Activated CD4-positive, alpha-beta T cell treated with anti-CD3 and anti-CD28 coated beads for 36 hours (primary cell): ENCODE measurements at regions of chr4 and their contacts with region 1.

Region 1: DNA sequence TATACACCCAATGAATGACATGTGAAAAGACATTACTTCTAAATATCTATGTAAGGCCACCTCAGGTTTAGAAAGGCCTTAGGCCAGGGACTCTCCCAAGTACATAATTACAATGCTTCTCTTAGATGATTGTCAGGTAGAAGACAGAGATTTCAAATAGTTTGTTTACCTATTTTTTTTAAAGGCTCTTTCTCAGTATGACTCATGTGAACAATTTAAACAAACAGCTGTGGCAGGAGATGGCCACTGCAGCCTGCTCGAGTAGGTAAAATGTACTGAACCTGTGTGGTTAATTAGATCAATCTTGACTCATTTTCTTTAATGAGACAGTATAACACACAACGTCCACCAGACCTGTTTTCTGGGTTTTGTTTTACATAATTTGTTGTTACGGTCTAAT is 50.2 kb downstream of the LEF1 start:
- DNase-seq: peak; percentile 53
- ATAC-seq: peak; percentile 18
- H3K4me3 Mint-ChIP-seq: peak overlapping the region; percentile 52
- H3K27ac Mint-ChIP-seq: peak overlapping the region; percentile 87
- H3K4me1 Mint-ChIP-seq: peaks cover 93% of the 10 kb centered on the region
- H3K27me3 Mint-ChIP-seq: no peaks in the 10 kb centered on the region

Region 2: GRCh38 chr4:108100827-108101226 is 17.7 kb before region 1 on chr4:
- CTCF ChIA-PET with region 1: interaction called, 46 read pairs
- POLR2A ChIA-PET with region 1: interaction called, 8 read pairs
- intact Hi-C with region 1: loop called in 1 of 2 experiments (anchors 1 kb)
- DNase-seq: no peak
- ATAC-seq: peak; percentile 23
- H3K4me3 Mint-ChIP-seq: peak overlapping the region; percentile 10
- H3K27ac Mint-ChIP-seq: peak overlapping the region; percentile 84
- H3K4me1 Mint-ChIP-seq: peaks cover 89% of the 10 kb centered on the region
- H3K27me3 Mint-ChIP-seq: no peaks in the 10 kb centered on the region

Region 3: DNA sequence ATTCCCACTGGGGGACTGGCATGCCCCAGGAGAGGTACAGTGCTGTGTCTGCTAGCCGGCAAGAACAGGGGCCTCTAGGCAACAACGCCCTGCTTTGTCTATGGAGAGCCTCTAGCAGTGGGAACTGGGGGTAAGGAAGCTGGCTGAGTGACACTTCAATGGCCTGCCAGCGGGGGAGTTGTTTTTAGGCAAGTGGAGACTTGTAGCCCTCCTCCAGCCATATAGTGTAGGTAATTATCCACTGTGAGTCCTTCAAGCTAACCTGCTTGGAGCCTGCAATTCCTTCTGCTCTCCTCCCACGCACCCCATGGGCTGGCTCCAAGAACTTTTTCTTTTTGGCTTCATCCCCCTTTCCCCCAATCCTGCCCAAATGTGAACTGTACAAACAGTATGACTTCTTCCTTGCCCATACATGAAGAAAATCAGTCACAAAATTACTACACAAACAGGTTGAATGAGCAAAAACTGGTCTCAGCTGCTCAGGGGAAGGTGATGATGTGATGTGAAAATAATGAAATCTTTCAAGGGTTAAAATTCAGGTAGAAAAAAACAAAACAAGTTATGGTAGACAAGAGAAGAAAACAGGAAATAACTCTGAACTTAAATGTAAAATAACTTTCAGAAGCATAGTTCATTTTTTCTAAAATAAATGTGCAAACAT is 17.2 kb after region 1 on chr4:
- CTCF ChIA-PET with region 1: interaction called, 37 read pairs
- POLR2A ChIA-PET with region 1: interaction called, 5 read pairs
- intact Hi-C with region 1: loop called (anchors 1 to 2 kb)
- DNase-seq: peak; percentile 42
- ATAC-seq: peak; percentile 48
- H3K4me3 Mint-ChIP-seq: peak overlapping the region; percentile 53
- H3K27ac Mint-ChIP-seq: peak overlapping the region; percentile 93
- H3K4me1 Mint-ChIP-seq: peaks cover 86% of the 10 kb centered on the region
- H3K27me3 Mint-ChIP-seq: no peaks in the 10 kb centered on the region

Region 4: GRCh38 chr4:108141213-108141950 is 22.9 kb after region 1 on chr4:
- CTCF ChIA-PET with region 1: interaction called, 37 read pairs
- POLR2A ChIA-PET with region 1: interaction called, 5 read pairs
- intact Hi-C with region 1: loop called in 1 of 2 experiments (anchors 1 kb)
- DNase-seq: peak; percentile 70
- ATAC-seq: peak; percentile 53
- H3K4me3 Mint-ChIP-seq: peak overlapping the region; percentile 75
- H3K27ac Mint-ChIP-seq: peak overlapping the region; percentile 100
- H3K4me1 Mint-ChIP-seq: peaks cover 89% of the 10 kb centered on the region
- H3K27me3 Mint-ChIP-seq: no peaks in the 10 kb centered on the region

Region 5: DNA sequence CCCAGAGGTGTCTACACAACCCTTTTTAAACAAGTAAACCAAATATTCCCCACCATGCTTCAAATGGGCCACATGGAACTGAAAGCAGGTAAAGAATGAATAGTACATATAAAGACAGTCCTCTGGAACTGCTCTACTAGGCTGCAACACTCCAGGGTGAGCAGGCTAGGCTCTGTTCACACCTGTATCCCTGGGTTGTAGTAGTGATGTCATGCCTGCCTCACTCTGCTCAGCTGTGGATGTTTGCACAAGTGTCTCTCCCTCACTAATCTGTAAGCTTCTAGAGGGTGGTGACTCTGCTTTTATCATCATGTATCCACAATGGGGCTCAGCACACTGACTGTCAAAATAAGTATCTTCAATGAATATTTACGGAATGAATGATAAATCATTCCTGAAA is 29.8 kb after region 1 on chr4:
- CTCF ChIA-PET with region 1: interaction called, 37 read pairs
- POLR2A ChIA-PET with region 1: interaction called, 5 read pairs
- intact Hi-C with region 1: no loop called
- DNase-seq: peak; percentile 69
- ATAC-seq: peak; percentile 66
- H3K4me3 Mint-ChIP-seq: peak overlapping the region; percentile 37
- H3K27ac Mint-ChIP-seq: peak overlapping the region; percentile 83
- H3K4me1 Mint-ChIP-seq: peaks cover 89% of the 10 kb centered on the region
- H3K27me3 Mint-ChIP-seq: no peaks in the 10 kb centered on the region

Region 6: GRCh38 chr4:108166441-108167315 is 48.2 kb after region 1 on chr4:
- CTCF ChIA-PET with region 1: interaction called, 7 read pairs
- POLR2A ChIA-PET with region 1: interaction called, 14 read pairs
- intact Hi-C with region 1: loop called in 1 of 2 experiments (anchors 2 kb)
- DNase-seq: peak; percentile 86
- ATAC-seq: peak; percentile 35
- H3K4me3 Mint-ChIP-seq: peak overlapping the region; percentile 85
- H3K27ac Mint-ChIP-seq: peak overlapping the region; percentile 96
- H3K4me1 Mint-ChIP-seq: peaks cover 39% of the 10 kb centered on the region
- H3K27me3 Mint-ChIP-seq: peaks cover 12% of the 10 kb centered on the region

Region 7: DNA sequence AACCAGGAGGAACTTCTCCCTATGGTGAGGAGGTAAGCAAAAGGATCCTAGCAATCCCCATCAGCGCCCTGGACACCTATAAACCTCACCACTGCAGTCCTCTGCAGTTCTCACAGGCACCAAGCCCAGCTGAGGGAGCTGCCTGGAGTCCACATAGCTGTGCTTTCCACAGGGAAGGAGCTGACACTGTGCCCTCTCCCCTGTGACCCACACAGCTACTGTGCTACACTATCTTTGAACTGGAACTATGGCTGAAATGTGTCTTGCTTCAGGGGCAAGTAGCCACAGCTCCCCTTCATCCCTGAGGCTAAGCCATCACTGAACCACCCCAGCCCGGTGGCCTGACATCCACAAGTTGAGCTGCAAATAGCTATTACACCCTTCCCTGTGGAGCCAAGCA is 293.3 kb after region 1 on chr4:
- CTCF ChIA-PET with region 1: no interaction called
- POLR2A ChIA-PET with region 1: no interaction called
- intact Hi-C with region 1: no loop called
- DNase-seq: no peak
- ATAC-seq: no peak
- H3K4me3 Mint-ChIP-seq: no peak overlapping the region
- H3K27ac Mint-ChIP-seq: no peak overlapping the region
- H3K4me1 Mint-ChIP-seq: peaks cover 2% of the 10 kb centered on the region
- H3K27me3 Mint-ChIP-seq: no peaks in the 10 kb centered on the region